ENCODE measurements at regions of chr9 and their contacts with region 1.

Region 1: GRCh38 chr9:122291458-122291857 is 26.8 kb downstream of the MRRF start:
- DNase-seq: no peak
- ATAC-seq: no peak
- H3K4me3 ChIP-seq: no peak overlapping the region
- H3K27ac ChIP-seq: no peak overlapping the region
- H3K4me1 ChIP-seq: no peaks in the 10 kb centered on the region
- H3K27me3 ChIP-seq: no peaks in the 10 kb centered on the region
- CTCF ChIP-seq: no peak

Region 2: DNA sequence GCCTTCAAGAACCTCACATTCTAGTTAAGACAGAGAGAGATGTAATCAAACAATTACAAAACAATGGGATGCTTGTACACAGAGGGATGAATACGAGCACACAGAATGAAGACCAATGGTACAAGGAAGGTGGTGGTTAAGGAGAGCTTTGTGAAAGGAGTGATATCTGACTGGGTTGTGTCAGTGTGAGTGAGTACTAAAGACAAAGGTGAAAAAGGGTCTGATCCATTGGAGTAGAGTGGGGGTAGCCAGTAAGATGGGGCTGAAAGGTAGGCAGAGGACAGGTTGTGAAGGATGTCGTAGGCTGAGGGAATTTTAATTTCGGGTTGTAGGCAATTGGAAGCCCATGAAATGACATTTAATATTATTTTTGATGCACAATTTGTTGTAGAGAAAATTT is 36.7 kb before region 1 on chr9:
- CTCF ChIA-PET with region 1: no interaction called
- POLR2A ChIA-PET with region 1: interaction called, 12 read pairs
- intact Hi-C with region 1: no loop called
- DNase-seq: no peak
- ATAC-seq: no peak
- H3K4me3 ChIP-seq: no peak overlapping the region
- H3K27ac ChIP-seq: no peak overlapping the region
- H3K4me1 ChIP-seq: peaks cover under 1% of the 10 kb centered on the region; the same call in 1 of the 2 replicates
- H3K27me3 ChIP-seq: no peaks in the 10 kb centered on the region
- CTCF ChIP-seq: no peak

Region 3: GRCh38 chr9:122742003-122742402 is 450.5 kb after region 1 on chr9 and contains the start of gene OR1L6:
- CTCF ChIA-PET with region 1: no interaction called
- POLR2A ChIA-PET with region 1: no interaction called
- intact Hi-C with region 1: no loop called
- DNase-seq: no peak
- ATAC-seq: no peak
- H3K4me3 ChIP-seq: no peak within 1 kb of the TSS
- H3K27ac ChIP-seq: no peak within 1 kb of the TSS
- H3K4me1 ChIP-seq: no peaks in the 10 kb centered on the region
- H3K27me3 ChIP-seq: peaks cover 4% of the 10 kb centered on the region; the same call in 1 of the 2 replicates
- CTCF ChIP-seq: no peak
- total RNA-seq, gene OR1L6: not detected in 2 replicates

Measured in PC-3 (cell line).